GM12878 (cell line): ENCODE measurements at regions of chr9 and their contacts with region 1.

Region 1: DNA sequence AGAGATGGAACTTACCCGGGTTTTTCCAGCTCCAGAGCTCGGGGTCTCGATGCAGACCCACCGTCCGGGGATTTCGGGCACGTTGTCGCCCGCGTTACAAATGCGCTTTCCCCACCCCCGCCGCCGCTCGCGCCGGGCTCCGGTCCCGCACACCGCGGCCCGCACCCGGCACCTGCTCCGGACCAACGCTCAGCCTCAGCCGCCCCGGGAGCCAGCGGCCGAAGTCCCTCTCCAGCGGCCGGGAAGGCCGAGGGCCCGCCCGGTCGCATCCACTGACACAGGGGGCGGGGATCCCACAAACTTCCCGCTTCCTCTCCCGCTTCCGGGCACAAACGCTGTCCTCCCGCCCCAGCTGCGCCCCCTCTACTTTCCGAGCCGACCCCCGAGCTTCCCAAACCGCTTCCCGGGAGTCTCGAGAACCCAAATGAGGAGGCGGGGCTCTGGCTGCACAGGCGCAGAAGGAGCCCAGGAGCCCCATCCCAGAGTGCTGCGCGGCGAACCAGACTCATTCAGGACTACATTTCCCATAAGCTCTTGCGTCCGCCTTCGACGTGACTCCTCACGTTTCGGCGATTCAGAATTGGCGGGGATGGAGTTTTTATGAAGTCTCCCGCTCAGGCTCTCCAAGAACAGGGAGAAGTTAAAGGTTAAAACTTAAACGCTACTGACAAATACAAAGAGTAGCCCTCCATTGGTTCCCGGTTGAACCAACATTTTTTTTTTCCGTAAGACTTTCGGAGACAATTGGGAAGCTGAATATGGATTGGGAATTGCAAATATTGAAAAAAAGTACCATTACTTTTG is at the start of gene ZNF782:
- DNase-seq: peak; percentile 60
- ATAC-seq: peak; percentile 96
- H3K4me3 ChIP-seq: peak within 1 kb of the TSS; percentile 83
- H3K27ac ChIP-seq: peak within 1 kb of the TSS; percentile 45
- H3K4me1 ChIP-seq: 0 out of 2 replicates have a peak, but pooled peaks cover 7% of the 10 kb centered on the region
- H3K27me3 ChIP-seq: no peaks in the 10 kb centered on the region
- CTCF ChIP-seq: no peak
- EP300 ChIP-seq: no peak
- POLR2A ChIP-seq: peak; percentile 58; the same call in 1 of the 2 replicates
- RAD21 ChIP-seq: no peak
- polyA plus RNA-seq, gene ZNF782: 0.55 to 0.82 TPM

Region 2: GRCh38 chr9:96686548-96687335 is 167.5 kb before region 1 on chr9:
- CTCF ChIA-PET with region 1: no interaction called
- POLR2A ChIA-PET with region 1: no interaction called
- RAD21 ChIA-PET with region 1: no interaction called
- SMC1A ChIA-PET with region 1: no interaction called
- in situ Hi-C with region 1: no loop called
- intact Hi-C with region 1: no loop called
- DNase-seq: no peak
- ATAC-seq: no peak
- H3K4me3 ChIP-seq: no peak overlapping the region
- H3K27ac ChIP-seq: no peak overlapping the region
- H3K4me1 ChIP-seq: no peaks in the 10 kb centered on the region
- H3K27me3 ChIP-seq: no peaks in the 10 kb centered on the region
- CTCF ChIP-seq: 0 out of 6 replicates have a peak, but pooled peaks of 1 of the 3 experiments have one; percentile 7
- EP300 ChIP-seq: no peak
- POLR2A ChIP-seq: no peak
- RAD21 ChIP-seq: no peak

Region 3: DNA sequence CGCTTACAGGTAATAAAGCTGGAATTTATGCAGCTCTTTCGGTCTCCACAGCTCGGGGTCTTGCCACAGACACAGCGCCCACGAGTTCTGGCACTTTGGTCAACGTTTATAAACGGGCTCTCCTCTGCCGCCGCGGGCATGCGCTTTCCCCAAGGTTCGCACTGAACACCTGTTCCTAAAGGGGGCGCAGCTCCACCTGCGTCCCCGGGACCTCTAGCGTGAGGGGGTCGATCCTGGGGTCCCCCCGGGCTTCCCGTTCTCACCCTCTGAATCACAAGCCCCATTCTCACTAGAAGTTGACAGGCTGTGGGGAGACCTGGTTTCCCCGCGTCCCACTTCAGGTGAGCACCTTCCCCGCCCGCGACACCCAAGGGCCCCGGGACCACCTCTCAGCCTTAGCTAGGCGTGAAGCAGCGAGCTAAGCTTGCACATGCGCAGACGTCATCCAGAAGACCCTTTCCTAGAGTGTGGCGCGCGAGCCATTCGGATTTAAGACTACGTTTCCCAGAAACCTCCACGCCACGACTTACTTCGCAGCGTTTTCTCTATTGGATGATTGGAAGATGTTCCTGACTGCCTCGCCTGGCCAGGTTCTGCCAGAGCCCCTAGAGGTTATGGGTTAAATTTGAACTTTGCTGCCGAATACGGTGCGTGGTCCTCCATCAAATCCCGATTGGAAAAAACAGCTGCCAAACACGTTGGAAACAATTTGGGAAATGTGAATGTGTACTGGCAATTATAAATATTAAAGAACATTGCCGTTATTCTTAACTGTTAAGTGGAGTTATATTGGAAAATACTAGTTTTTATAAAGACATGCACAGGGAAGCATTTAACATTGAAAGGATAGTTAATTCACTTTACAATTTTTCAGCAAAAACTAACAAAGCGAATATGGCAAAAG is 21.4 kb after region 1 on chr9:
- CTCF ChIA-PET with region 1: interaction called, 145 read pairs
- POLR2A ChIA-PET with region 1: interaction called, 11 read pairs
- RAD21 ChIA-PET with region 1: interaction called, 91 read pairs
- SMC1A ChIA-PET with region 1: interaction called, 112 read pairs
- in situ Hi-C with region 1: no loop called
- intact Hi-C with region 1: no loop called
- DNase-seq: peak; percentile 51
- ATAC-seq: peak; percentile 85
- H3K4me3 ChIP-seq: peak overlapping the region; percentile 62
- H3K27ac ChIP-seq: peak overlapping the region; percentile 22
- H3K4me1 ChIP-seq: peaks cover 35% of the 10 kb centered on the region
- H3K27me3 ChIP-seq: no peaks in the 10 kb centered on the region; a peak in 1 of 4 replicates
- CTCF ChIP-seq: peak; percentile 21 to 36 (median 23); a peak in 3 of 6 replicates
- EP300 ChIP-seq: no peak
- POLR2A ChIP-seq: peak; percentile 55
- RAD21 ChIP-seq: 0 out of 2 replicates have a peak, but pooled peaks have one; percentile 3

Region 4: DNA sequence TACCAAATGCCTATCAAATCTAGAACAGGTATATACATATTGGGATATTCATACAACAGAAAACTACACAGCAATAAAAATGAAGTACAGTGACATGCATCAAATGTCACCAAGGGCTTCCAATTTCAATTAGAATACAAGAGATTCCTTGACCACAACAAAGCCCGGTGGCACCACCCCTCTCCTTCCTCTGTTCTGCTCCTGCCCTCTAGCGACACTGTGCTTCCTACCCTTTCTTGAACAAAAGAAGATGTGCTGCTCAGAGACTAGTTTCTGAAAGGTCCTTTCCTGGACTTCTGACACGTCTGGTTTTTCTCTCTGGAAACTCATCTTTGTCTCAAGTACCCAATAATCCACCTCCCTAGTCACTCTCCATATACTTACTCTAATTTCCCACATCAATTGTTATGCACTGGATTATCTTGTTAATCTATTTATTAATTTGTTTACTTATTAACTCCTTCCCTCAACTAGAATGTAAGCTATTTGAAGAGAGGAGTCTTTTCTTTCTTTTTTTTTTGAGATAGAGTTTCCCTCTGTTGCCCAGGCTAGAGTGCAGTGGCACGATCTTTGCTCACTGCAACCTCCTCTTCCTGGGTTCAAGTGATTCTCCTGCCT is 255.0 kb after region 1 on chr9:
- CTCF ChIA-PET with region 1: interaction called, 16 read pairs
- POLR2A ChIA-PET with region 1: no interaction called
- RAD21 ChIA-PET with region 1: interaction called, 8 read pairs
- SMC1A ChIA-PET with region 1: interaction called, 15 read pairs
- in situ Hi-C with region 1: no loop called
- intact Hi-C with region 1: loop called (anchors 1 kb)
- DNase-seq: peak; percentile 1
- ATAC-seq: peak; percentile 86
- H3K4me3 ChIP-seq: no peak overlapping the region
- H3K27ac ChIP-seq: no peak overlapping the region
- H3K4me1 ChIP-seq: no peaks in the 10 kb centered on the region
- H3K27me3 ChIP-seq: no peaks in the 10 kb centered on the region; a peak in 1 of 4 replicates
- CTCF ChIP-seq: peak; percentile 29 to 72 (median 69); a peak in 4 of 6 replicates
- EP300 ChIP-seq: no peak
- POLR2A ChIP-seq: no peak
- RAD21 ChIP-seq: peak; percentile 35; the same call in 1 of the 2 replicates

Region 5: DNA sequence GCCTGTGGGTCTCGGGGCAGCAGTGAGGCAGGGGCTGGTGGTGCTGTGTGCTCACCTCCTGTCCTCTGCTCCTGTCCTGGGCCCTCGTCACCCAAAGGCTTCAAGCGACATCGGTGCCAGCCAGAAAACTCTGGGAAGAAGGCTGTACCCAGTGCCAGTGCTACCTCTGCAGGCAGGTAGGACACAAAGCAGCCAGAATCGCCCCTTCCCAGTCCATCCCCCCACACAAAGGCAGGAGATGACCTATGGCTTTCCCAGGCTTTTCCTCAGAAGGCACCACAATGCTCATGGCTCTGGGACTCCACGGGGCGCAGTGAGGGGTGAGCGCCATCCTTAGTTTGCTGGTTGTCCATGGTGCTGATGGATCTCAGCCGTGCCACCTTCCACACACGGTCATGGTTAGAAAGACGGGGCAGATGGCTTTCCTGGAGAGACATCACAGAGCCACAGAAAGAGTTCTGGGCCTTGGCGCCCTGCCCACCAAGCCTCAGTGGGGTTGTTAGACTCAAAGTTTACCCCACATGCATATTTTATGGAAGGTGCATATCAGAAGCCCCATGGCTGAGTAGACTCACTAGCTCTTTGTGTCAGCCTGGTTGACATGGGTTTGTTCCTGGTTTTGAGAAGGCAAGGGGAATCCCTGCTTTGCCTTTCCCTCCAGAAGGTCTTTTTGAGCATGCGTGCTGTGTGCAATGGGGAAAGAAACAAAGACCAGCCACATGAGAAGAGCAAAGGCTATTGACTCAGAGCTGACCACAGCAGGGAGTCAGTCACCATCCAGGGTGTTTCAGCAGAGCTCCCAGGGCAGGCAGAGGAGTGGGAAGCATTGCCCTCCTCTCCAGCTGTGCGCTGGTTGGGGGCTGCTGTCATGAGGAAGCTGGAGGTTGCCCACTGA is 508.2 kb after region 1 on chr9:
- CTCF ChIA-PET with region 1: interaction called, 29 read pairs
- POLR2A ChIA-PET with region 1: no interaction called
- RAD21 ChIA-PET with region 1: interaction called, 4 read pairs
- SMC1A ChIA-PET with region 1: interaction called, 5 read pairs
- in situ Hi-C with region 1: no loop called
- intact Hi-C with region 1: no loop called
- DNase-seq: peak; percentile 44
- ATAC-seq: peak; percentile 34
- H3K4me3 ChIP-seq: peak overlapping the region; percentile 19; the same call in 1 of the 2 replicates
- H3K27ac ChIP-seq: no peak overlapping the region
- H3K4me1 ChIP-seq: peaks cover 49% of the 10 kb centered on the region
- H3K27me3 ChIP-seq: no peaks in the 10 kb centered on the region; a peak in 1 of 4 replicates
- CTCF ChIP-seq: no peak
- EP300 ChIP-seq: no peak
- POLR2A ChIP-seq: no peak
- RAD21 ChIP-seq: no peak

Region 6: DNA sequence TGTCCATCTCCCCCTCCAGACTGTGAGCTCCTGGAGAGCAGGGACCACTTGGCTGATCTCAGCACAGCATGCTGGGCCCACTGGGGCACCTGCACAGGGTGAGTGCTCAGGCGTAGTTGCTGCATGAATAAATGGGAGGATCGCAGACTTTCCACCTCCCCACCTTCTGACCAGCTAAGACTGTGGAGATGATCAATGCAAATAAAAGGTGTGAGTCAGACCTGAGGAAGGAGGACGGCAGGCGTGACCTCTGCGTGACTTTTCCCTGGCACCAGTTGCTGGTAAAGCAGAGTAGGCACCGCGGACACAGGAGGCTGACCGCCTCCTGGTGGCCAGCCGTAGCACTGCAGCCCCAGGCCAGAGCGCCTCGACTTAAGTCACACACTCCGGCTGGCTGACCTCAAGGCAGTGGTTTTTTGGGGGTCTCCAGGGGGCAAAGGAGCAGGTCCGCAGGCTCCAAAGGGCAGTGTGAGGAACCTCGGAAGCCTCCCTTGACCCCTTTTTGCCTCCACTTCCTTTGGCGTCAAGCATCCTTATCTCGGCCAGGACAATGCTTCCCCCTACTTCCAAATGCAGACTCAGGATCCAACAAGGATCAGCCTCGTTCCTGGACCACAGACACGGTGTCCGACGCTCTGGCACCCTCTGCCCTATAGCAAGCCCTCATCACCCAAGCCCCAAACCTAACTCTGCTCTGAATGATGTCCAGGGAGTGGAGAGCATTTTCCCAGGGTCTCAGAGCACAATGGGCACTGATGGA is 544.9 kb after region 1 on chr9:
- CTCF ChIA-PET with region 1: interaction called, 32 read pairs
- POLR2A ChIA-PET with region 1: no interaction called
- RAD21 ChIA-PET with region 1: interaction called, 16 read pairs
- SMC1A ChIA-PET with region 1: interaction called, 19 read pairs
- in situ Hi-C with region 1: loop called (anchors 5 kb)
- intact Hi-C with region 1: loop called (anchors 1 kb)
- DNase-seq: no peak
- ATAC-seq: peak; percentile 81
- H3K4me3 ChIP-seq: no peak overlapping the region
- H3K27ac ChIP-seq: no peak overlapping the region
- H3K4me1 ChIP-seq: peaks cover 6% of the 10 kb centered on the region
- H3K27me3 ChIP-seq: no peaks in the 10 kb centered on the region
- CTCF ChIP-seq: peak; percentile 86 to 100 (median 99)
- EP300 ChIP-seq: no peak
- POLR2A ChIP-seq: no peak
- RAD21 ChIP-seq: peak; percentile 82

Region 7: DNA sequence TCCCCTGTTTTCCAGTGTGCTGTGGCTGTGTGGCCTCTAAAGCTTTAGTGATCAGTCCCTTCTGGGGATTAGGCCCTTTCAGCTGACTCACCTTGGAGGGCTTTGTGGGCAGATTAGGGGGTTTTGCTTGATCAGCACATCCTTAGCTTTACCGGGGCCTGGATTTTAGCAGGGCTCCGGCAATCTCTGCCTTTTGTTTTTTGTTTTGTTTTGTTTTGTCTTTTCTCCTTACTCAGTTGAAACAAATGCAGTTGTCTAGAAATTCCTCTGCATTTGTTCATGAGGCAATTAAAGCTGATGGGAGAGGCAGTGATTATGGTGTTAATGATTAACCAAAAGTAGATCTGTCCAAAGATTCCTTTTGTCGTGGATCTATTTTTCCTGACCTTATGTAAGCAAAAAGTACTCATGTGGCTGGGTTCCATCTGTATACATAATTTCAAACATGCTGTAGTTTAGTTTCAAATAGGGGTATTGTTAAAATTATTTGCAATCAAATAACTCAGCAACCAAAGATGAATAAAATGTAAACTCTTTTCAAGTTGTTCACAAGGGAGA is 552.4 kb after region 1 on chr9:
- CTCF ChIA-PET with region 1: interaction called, 14 read pairs
- POLR2A ChIA-PET with region 1: interaction called, 3 read pairs
- RAD21 ChIA-PET with region 1: interaction called, 6 read pairs
- SMC1A ChIA-PET with region 1: interaction called, 17 read pairs
- in situ Hi-C with region 1: no loop called
- intact Hi-C with region 1: no loop called
- DNase-seq: no peak
- ATAC-seq: peak; percentile 60
- H3K4me3 ChIP-seq: no peak overlapping the region
- H3K27ac ChIP-seq: no peak overlapping the region
- H3K4me1 ChIP-seq: no peaks in the 10 kb centered on the region
- H3K27me3 ChIP-seq: no peaks in the 10 kb centered on the region; a peak in 1 of 4 replicates
- CTCF ChIP-seq: no peak
- EP300 ChIP-seq: no peak
- POLR2A ChIP-seq: no peak
- RAD21 ChIP-seq: no peak